AG04450 (cell line): ENCODE measurements at regions of chr11 and their contacts with region 1.

Region 1: DNA sequence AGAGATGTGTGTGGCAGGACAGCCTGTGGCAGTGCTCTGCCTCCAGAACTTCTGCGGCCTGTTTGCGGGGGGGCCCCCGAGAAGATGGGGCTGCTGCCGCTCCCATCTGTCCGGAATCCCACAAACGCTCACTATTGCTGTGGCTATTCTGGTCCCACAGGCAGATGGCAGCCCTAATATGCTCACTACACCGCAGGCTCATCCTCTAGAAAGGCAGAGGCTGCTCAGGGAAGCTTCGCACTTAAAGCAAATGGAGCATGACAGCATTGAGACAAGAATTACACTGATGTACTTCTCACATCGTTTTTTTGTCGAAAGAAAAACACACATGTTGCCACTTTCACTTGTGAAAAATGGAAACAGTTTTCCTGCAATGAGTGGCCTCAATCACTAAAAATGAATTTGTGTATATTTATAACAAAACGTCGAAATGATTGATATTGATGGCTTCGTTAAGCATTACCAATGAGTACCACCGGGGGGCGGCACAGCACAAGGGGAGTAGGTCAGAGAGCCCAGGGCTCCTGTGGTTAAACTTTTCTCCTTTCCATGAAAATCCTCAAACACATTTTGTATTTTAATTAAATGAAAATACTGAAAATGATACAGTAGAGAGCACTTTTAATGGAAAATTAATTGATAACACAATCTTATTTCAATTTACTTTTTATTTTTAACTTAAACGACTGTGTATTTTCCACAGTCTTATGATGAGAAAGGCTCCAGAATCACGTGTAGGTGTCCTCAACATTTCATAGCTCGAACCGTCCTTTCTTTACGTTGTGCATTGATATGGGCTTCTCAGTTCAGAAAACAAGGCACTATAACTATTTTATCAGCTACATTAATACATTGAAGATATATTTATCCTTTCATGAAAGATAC is 69.1 kb downstream of the CTTN start:
- DNase-seq: no peak
- H3K4me3 ChIP-seq: no peak overlapping the region
- H3K27ac ChIP-seq: no peak overlapping the region
- H3K27me3 ChIP-seq: peaks cover 14% of the 10 kb centered on the region
- CTCF ChIP-seq: peak; percentile 95

Region 2: DNA sequence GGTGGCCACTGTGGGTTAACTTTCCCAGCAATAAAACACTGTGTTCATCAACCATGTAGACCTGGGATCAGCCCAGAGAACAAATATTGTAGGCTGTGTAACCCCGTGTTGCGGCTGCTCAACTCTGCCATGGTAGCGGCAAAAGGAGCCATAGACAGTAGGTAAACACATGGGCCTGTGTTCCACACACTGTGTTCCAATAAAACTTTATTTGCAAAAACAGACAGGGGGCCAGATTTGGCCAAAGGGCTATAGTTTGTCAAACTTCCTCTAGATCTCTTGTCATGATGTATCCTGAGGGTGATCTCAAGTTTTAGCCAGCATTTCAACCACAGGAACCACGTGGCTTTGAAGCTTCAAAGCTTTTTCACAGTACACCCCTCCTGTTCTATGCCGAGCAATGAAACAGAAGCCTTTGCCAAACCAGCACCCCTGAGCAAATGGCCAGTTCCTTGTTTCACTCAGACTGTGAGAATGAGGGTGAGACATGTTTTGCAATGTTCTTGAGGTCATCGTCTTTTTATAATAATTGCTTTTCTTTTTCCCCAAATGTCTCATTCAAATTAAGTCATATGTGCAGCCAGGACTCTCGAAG is 314.2 kb before region 1 on chr11:
- CTCF ChIA-PET with region 1: no interaction called
- POLR2A ChIA-PET with region 1: no interaction called
- DNase-seq: no peak
- H3K4me3 ChIP-seq: no peak overlapping the region
- H3K27ac ChIP-seq: no peak overlapping the region
- H3K27me3 ChIP-seq: peaks cover 18% of the 10 kb centered on the region
- CTCF ChIP-seq: no peak

Region 3: GRCh38 chr11:70755410-70756161 is 288.1 kb after region 1 on chr11:
- CTCF ChIA-PET with region 1: interaction called, 37 read pairs
- POLR2A ChIA-PET with region 1: no interaction called
- DNase-seq: peak; percentile 4
- H3K4me3 ChIP-seq: no peak overlapping the region
- H3K27ac ChIP-seq: no peak overlapping the region
- H3K27me3 ChIP-seq: no peaks in the 10 kb centered on the region
- CTCF ChIP-seq: peak; percentile 74